ENCODE measurements at regions of chr14 and their contacts with region 1.

Region 1: GRCh38 chr14:21437063-21437901 is 18.6 kb downstream of the CHD8 start:
- DNase-seq: peak; percentile 98
- H3K4me3 ChIP-seq: peak overlapping the region; percentile 52 to 89 (median 77)
- H3K27ac ChIP-seq: peak overlapping the region; percentile 85 to 90 (median 86)
- H3K4me1 ChIP-seq: peaks cover 0 to 27% (median 22%) of the 10 kb centered on the region in 4 donors
- H3K27me3 ChIP-seq: no peaks in the 10 kb centered on the region
- CTCF ChIP-seq: no peak
- EP300 ChIP-seq: no peak
- POLR2A ChIP-seq: peak in 1 of 2 donors; percentile 11

Region 2: GRCh38 chr14:20799892-20800544 is 637.3 kb before region 1 on chr14:
- intact Hi-C with region 1: no loop called
- DNase-seq: peak; percentile 72
- H3K4me3 ChIP-seq: peak overlapping the region in 2 of 4 donors; percentile 24 to 42
- H3K27ac ChIP-seq: peak overlapping the region; percentile 56 to 65 (median 60)
- H3K4me1 ChIP-seq: peaks cover 0 to 16% (median 13%) of the 10 kb centered on the region in 4 donors
- H3K27me3 ChIP-seq: no peaks in the 10 kb centered on the region
- CTCF ChIP-seq: no peak
- EP300 ChIP-seq: no peak
- POLR2A ChIP-seq: no peak

Region 3: DNA sequence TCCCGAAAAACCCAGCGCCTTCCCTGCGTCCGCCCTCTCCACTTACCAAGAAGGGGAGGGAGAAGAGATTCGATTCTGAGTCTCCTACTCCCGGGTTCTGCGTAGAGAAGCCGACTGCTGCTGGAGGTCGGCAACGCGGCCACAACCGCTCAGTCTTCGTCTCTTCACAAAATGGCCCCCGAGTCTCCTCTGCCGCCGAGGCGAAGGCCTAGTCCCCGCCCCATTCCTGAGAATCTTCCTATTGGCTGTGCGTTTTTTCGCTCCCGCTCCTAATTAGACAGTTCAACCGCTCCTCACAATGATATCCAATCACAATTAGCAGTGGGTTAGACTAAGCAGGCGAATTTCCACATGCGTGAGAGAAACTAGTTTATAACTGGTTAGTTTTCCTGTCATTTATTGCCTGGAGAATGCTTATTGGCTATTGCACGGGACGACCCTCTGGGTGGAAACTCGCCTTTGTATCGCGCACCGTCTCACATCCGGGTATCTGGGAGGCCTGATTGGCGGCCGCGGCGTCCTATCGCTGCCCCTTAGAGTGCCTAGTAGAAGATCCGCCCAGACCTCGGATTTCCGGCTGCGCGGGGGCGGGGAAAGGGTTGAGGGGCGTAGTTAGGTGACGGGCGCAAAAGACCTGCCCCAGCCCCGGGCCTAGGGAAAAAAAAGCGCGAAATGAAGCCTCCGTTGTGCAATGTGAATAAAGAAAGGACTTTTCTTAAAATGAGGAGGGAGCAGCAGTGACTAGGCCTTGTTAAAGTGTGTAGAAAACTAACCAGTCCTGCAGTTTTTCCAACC is 167.8 kb before region 1 on chr14 and contains the start of gene HNRNPC:
- intact Hi-C with region 1: loop called (anchors 5 kb)
- DNase-seq: peak; percentile 100
- H3K4me3 ChIP-seq: peak within 1 kb of the TSS; percentile 81 to 90 (median 88)
- H3K27ac ChIP-seq: peak within 1 kb of the TSS; percentile 94 to 99 (median 99)
- H3K4me1 ChIP-seq: peaks cover 0 to 45% (median 40%) of the 10 kb centered on the region in 4 donors
- H3K27me3 ChIP-seq: no peaks in the 10 kb centered on the region
- CTCF ChIP-seq: no peak
- EP300 ChIP-seq: peak in 1 of 4 donors; percentile 9
- POLR2A ChIP-seq: peak; percentile 98
- total RNA-seq, gene HNRNPC: 365 to 449 (median 404) TPM